ENCODE measurements at regions of chr11 and their contacts with region 1.

Region 1: DNA sequence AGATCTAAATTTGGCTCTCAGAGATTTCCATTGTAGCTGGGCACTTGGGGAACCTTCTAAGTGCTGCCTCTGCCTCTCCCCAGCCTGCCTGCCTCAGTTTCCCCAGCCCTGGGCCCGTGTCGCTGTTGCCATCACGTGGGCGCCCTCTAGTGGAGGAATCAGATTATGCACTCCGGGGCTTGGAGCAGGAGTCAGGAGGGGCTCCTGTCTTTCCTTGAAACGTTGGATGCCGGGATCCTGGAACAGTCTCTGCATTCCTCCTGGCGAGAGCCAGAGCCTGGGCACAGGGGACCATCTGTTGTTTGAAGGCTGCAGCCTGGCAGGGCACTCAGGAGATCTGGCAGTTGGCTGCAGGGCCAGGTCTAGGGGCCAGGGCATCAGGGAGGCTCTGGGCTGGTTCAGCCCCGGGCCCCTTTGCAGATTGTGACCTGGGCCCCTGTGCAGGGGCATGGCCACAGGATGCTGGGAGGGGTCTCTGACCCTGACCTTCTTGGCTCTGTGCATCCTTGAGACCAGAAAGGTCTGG is 71.6 kb downstream of the LRP5 start:
- DNase-seq: peak; percentile 74 to 75
- ATAC-seq: peak in 5 of 8 donors; percentile 3 to 50 (median 26)
- H3K4me3 ChIP-seq: no peak overlapping the region
- H3K27ac ChIP-seq: peak overlapping the region in 4 of 10 donors; percentile 35 to 91 (median 60)
- H3K4me1 ChIP-seq: peaks cover 11 to 57% (median 53%) of the 10 kb centered on the region in 9 donors
- H3K27me3 ChIP-seq: no peaks in the 10 kb centered on the region
- CTCF ChIP-seq: peak; percentile 88 to 95 (median 93)

Region 2: DNA sequence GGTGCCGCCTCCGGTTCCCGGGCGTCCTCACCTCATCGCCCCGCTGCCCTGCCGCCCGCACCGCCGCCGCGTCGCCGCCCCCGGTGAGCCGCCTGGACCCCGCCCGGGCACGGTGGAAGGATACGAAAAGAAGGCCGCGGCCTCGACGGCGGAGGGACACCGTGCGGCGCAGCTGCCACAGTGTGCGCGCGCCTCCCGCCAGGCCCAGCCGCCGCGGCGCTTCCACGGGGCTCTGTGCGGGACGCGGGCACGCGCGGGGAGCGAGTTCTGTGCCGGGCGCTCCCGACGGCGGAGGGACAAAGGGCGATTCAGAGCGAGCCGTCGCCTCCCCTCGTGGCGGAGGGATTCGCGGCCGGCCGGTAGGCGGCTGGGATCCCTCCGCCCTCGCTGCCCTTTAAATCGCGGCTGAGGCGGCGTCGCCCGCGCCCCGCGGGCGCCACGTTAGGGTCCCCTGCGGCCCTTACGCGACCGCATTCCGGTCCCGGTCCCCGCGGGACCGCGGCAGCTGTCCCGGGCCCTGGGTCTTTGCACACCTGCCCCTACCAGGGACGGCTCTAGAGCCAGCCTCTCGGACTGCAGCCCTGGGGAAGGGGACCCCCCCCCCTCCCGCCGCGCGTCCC is 170.4 kb before region 1 on chr11:
- intact Hi-C with region 1: loop called in 1 of 10 experiments (anchors 5 kb)
- DNase-seq: peak; percentile 87 to 90
- ATAC-seq: peak; percentile 59 to 80 (median 69)
- H3K4me3 ChIP-seq: peak overlapping the region; percentile 68 to 97 (median 81)
- H3K27ac ChIP-seq: peak overlapping the region; percentile 94 to 100 (median 100)
- H3K4me1 ChIP-seq: peaks cover 17 to 65% (median 49%) of the 10 kb centered on the region in 9 donors
- H3K27me3 ChIP-seq: no peaks in the 10 kb centered on the region
- CTCF ChIP-seq: peak in 3 of 9 donors; percentile 7 to 18 (median 9)

Region 3: DNA sequence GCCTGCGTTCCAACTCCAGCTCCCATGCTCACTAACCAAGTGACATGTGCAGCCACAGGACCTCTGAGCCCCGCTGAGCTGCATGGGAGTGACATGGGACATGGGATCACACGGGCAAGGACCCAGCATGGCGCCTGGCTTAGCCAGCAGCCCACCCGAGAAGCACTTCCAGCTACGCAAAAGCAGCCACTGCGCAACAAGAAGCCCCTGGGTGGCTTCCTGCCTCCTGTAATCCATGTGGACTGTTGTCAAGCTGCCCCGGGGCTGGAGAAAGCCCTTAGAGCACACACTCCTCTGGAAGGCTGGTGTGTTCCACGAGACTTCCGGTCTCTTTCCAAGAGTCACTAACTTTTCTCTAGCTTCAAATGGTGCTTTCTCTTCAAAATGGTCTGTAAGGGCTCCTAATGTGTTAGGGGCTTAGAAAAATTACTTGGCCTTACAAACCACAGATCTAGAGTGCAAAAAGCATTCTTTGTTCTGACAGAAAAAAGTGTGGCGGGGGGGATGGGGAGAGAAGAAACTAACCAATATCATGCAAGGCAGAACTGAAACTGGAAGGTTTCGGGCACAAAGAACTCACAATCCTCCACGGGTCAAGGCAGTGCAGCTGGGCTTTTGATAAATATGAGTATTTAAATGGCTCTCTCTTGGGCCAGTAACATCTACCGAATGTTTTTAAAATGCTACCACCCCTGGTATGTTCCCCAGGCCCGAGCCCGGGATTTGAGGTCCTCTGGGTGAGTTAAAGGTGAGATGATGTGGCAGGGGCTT is 117.7 kb before region 1 on chr11:
- intact Hi-C with region 1: loop called in 8 of 10 experiments (anchors 2 to 5 kb)
- DNase-seq: no peak
- ATAC-seq: no peak
- H3K4me3 ChIP-seq: no peak overlapping the region
- H3K27ac ChIP-seq: peak overlapping the region in 1 of 10 donors; percentile 28
- H3K4me1 ChIP-seq: peaks cover 6 to 42% (median 24%) of the 10 kb centered on the region in 9 donors
- H3K27me3 ChIP-seq: no peaks in the 10 kb centered on the region
- CTCF ChIP-seq: no peak

Region 4: GRCh38 chr11:68297812-68298658 is 86.0 kb before region 1 on chr11:
- intact Hi-C with region 1: loop called in 3 of 10 experiments (anchors 5 kb)
- DNase-seq: peak; percentile 75 to 83
- ATAC-seq: peak; percentile 95 to 98 (median 97)
- H3K4me3 ChIP-seq: peak overlapping the region in 4 of 10 donors; percentile 9 to 23 (median 20)
- H3K27ac ChIP-seq: peak overlapping the region in 1 of 10 donors; percentile 5
- H3K4me1 ChIP-seq: peaks cover 6 to 28% (median 17%) of the 10 kb centered on the region in 9 donors
- H3K27me3 ChIP-seq: no peaks in the 10 kb centered on the region
- CTCF ChIP-seq: peak; percentile 97 to 99 (median 98)

Region 5: DNA sequence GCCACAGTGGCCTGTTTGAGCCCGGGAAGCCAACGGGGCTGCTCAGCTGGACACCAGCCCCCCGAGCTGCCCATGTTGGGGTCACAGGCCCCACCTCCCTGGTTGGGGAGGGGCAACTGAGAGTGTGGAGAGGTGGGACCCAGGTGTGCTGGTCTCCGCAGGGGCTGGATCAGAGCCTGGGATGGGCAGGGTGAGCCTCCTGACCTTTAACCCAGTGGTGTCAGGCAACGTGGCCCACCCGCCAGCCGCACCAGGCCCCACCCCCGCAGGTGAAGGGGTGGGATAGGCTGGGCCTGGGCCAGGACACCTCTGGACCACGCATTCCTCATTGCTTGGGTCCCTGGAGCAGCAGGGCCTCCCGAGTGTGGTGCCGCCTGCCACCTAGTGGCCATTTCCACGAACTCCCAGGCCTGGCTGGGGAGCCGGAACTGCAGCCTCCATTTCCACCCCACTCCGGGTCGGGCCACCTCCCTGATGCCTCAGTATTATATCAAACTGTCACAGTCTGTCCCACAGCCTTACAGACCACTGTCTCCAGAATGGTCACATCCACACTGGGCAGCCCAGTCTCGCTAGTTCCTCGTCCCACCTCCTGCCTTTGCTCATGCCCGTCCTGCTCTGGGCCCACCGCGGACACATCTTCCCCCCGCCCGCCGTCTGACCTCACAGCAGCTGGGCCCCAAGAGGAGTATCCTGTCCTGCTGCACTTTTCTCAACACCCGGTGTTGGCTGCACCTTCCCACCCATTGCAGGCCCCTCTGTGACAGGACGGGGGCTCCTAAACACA is 63.2 kb after region 1 on chr11:
- intact Hi-C with region 1: loop called in 6 of 10 experiments (anchors 5 to 10 kb)
- DNase-seq: peak; percentile 74 to 83
- ATAC-seq: peak; percentile 88 to 95 (median 91)
- H3K4me3 ChIP-seq: no peak overlapping the region
- H3K27ac ChIP-seq: peak overlapping the region in 2 of 10 donors; percentile 9 to 13
- H3K4me1 ChIP-seq: peaks cover 0 to 10% (median 0%) of the 10 kb centered on the region in 9 donors
- H3K27me3 ChIP-seq: no peaks in the 10 kb centered on the region
- CTCF ChIP-seq: peak; percentile 88 to 98 (median 96)